ENCODE measurements at regions of chrX and their contacts with region 1.

Region 1: DNA sequence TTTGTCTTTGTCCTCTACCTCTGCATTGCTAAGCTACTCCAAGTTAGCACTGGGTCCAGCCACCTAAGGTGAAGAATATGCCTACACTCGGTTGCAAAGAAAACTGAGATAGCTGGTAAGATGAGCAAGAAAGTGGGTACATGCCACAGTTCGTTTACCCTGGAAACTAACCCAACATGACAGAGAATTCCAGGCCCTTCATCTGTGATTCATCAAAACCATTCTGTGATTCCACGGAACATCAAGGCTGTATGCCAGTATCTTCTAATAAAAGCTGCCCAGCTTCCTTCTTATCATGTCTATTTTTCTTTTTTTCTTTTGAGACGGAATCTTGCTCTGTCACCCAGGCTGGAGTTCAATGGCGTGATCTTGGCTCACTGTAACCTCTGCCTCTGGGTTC is 58.7 kb upstream of the SPANXC start:
- DNase-seq: no peak
- H3K4me3 ChIP-seq: no peak overlapping the region
- CTCF ChIP-seq: no peak

Region 2: GRCh38 chrX:141341341-141341740 is 40.3 kb after region 1 on chrX:
- in situ Hi-C with region 1: loop called (anchors 5 kb)
- DNase-seq: peak; percentile 56
- H3K4me3 ChIP-seq: no peak overlapping the region
- CTCF ChIP-seq: no peak